PC-9 (cell line): ENCODE measurements at regions of chr1 and their contacts with region 1.

Region 1: GRCh38 chr1:17236779-17237560 is 11.9 kb upstream of the PADI3 start:
- DNase-seq: peak; percentile 83 to 94
- H3K4me3 ChIP-seq: no peak overlapping the region
- H3K27ac ChIP-seq: peak overlapping the region; percentile 53
- H3K4me1 ChIP-seq: peaks cover 52% of the 10 kb centered on the region
- H3K27me3 ChIP-seq: no peaks in the 10 kb centered on the region
- CTCF ChIP-seq: peak; percentile 87

Region 2: DNA sequence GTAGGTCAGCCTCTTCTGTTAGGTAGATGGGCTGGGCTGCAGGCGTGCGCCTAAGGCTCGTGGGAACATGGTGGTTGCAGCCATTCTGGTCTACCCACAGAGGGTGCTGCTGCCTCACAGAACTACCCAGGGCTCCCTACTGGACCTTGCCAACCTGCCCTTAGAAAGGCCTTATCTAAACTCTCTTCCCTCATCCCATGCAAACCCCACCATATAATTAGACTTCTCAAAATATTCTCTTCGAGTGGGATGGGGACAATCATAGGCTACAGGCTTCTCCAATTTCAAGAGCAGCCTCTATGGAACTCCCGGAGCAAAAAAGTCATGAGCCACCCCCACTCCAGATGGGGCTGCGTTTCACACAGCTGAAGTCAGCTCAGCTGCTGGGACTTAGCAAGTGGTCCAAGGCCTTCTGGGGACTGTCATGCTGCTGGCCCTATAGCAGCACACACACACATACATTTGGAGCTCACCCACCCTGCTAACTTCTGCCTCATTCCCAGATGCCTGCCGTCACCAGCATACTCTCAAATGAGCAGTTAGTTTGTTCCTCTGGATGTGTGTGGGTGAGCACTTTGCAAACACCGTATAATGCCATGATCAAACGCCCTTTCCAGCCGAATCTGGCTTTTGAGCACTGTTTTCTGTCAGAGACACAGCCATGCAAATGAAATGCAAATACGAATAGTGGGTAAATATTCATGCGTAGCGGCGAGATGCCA is 177.1 kb before region 1 on chr1:
- CTCF ChIA-PET with region 1: no interaction called
- POLR2A ChIA-PET with region 1: no interaction called
- intact Hi-C with region 1: loop called (anchors 1 kb)
- DNase-seq: peak; percentile 66 to 75
- H3K4me3 ChIP-seq: no peak overlapping the region
- H3K27ac ChIP-seq: no peak overlapping the region
- H3K4me1 ChIP-seq: no peaks in the 10 kb centered on the region
- H3K27me3 ChIP-seq: no peaks in the 10 kb centered on the region
- CTCF ChIP-seq: peak; percentile 75

Region 3: GRCh38 chr1:17190010-17190995 is 46.7 kb before region 1 on chr1:
- CTCF ChIA-PET with region 1: no interaction called
- POLR2A ChIA-PET with region 1: interaction called, 8 read pairs
- intact Hi-C with region 1: loop called (anchors 1 kb)
- DNase-seq: peak; percentile 90 to 93
- H3K4me3 ChIP-seq: peak overlapping the region; percentile 30
- H3K27ac ChIP-seq: peak overlapping the region; percentile 86
- H3K4me1 ChIP-seq: peaks cover 26% of the 10 kb centered on the region
- H3K27me3 ChIP-seq: no peaks in the 10 kb centered on the region
- CTCF ChIP-seq: no peak

Region 4: GRCh38 chr1:17207966-17208418 is 29.0 kb before region 1 on chr1:
- CTCF ChIA-PET with region 1: interaction called, 11 read pairs
- POLR2A ChIA-PET with region 1: interaction called, 28 read pairs
- intact Hi-C with region 1: no loop called
- DNase-seq: peak; percentile 81 to 83
- H3K4me3 ChIP-seq: peak overlapping the region; percentile 65; the same call in 1 of the 2 replicates
- H3K27ac ChIP-seq: peak overlapping the region; percentile 95
- H3K4me1 ChIP-seq: peaks cover 87% of the 10 kb centered on the region
- H3K27me3 ChIP-seq: no peaks in the 10 kb centered on the region
- CTCF ChIP-seq: no peak

Region 5: DNA sequence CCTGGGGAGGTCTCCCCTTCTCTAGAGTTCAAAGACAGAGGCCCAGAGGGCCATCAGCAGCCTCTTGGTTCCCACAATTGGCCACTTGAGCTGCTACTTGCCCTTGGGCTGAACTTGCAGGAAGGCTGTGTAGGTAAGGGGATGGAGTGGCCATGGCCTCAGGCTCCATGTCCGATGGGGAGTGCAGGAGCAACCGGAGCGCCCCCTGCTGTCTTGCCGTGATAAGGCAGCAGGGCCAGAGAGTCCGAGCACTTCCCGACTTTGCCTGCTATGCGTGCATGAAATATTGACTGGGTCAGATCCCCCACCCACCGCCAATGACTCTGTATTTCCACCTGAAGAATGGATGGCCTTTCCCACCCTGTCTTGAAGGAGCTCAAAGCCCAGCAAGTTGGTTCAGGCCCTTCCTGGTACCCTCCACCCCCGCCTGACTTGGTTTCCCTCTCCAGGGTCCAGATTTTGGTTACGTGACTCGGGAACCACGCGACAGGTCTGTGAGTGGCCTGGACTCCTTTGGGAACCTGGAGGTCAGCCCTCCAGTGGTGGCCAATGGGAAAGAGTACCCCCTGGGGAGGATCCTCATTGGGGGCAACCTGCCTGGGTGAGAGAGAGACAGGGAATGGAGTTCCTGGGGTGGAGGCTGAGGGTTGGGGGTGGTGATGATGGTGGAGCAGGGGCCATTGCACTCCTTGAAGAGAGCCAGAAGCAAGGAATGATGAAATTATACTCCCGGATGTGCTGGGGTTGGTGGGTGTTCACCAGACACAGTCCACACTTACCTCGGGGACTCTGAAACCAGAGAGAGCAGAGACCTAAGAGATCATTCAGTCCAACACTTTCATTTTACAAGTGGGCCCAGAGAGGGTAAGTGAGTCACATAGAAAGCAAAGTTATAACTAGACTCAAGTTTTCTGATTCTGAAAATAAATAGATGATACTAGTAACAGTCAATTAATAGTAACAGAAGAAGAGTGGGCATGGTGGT is 37.5 kb after region 1 on chr1:
- CTCF ChIA-PET with region 1: interaction called, 5 read pairs
- POLR2A ChIA-PET with region 1: no interaction called
- intact Hi-C with region 1: loop called (anchors 1 kb)
- DNase-seq: peak; percentile 37 to 71
- H3K4me3 ChIP-seq: no peak overlapping the region
- H3K27ac ChIP-seq: no peak overlapping the region
- H3K4me1 ChIP-seq: peaks cover 24% of the 10 kb centered on the region
- H3K27me3 ChIP-seq: no peaks in the 10 kb centered on the region
- CTCF ChIP-seq: peak; percentile 75

Region 6: GRCh38 chr1:17405898-17406759 is 169.2 kb after region 1 on chr1:
- CTCF ChIA-PET with region 1: no interaction called
- POLR2A ChIA-PET with region 1: no interaction called
- intact Hi-C with region 1: loop called (anchors 1 kb)
- DNase-seq: peak; percentile 39 to 73
- H3K4me3 ChIP-seq: no peak overlapping the region
- H3K27ac ChIP-seq: no peak overlapping the region
- H3K4me1 ChIP-seq: peaks cover 11% of the 10 kb centered on the region
- H3K27me3 ChIP-seq: no peaks in the 10 kb centered on the region
- CTCF ChIP-seq: peak; percentile 78